ENCODE measurements at regions of chr12 and their contacts with region 1.

Region 1: GRCh38 chr12:48890657-48891418 is 25.2 kb upstream of the RND1 start:
- DNase-seq: peak; percentile 27
- H3K4me3 ChIP-seq: peak overlapping the region; percentile 47
- H3K27ac ChIP-seq: no peak overlapping the region
- H3K27me3 ChIP-seq: peaks cover 9% of the 10 kb centered on the region
- CTCF ChIP-seq: peak; percentile 94

Region 2: GRCh38 chr12:48750769-48751735 is 139.8 kb before region 1 on chr12:
- CTCF ChIA-PET with region 1: interaction called, 21 read pairs
- POLR2A ChIA-PET with region 1: no interaction called
- DNase-seq: no peak
- H3K4me3 ChIP-seq: no peak overlapping the region
- H3K27ac ChIP-seq: peak overlapping the region; percentile 39
- H3K27me3 ChIP-seq: no peaks in the 10 kb centered on the region
- CTCF ChIP-seq: no peak

Region 3: GRCh38 chr12:48873096-48873495 is 17.7 kb before region 1 on chr12:
- CTCF ChIA-PET with region 1: interaction called, 61 read pairs
- POLR2A ChIA-PET with region 1: no interaction called
- DNase-seq: no peak
- H3K4me3 ChIP-seq: no peak overlapping the region
- H3K27ac ChIP-seq: no peak overlapping the region
- H3K27me3 ChIP-seq: peaks cover 7% of the 10 kb centered on the region
- CTCF ChIP-seq: no peak

Region 4: DNA sequence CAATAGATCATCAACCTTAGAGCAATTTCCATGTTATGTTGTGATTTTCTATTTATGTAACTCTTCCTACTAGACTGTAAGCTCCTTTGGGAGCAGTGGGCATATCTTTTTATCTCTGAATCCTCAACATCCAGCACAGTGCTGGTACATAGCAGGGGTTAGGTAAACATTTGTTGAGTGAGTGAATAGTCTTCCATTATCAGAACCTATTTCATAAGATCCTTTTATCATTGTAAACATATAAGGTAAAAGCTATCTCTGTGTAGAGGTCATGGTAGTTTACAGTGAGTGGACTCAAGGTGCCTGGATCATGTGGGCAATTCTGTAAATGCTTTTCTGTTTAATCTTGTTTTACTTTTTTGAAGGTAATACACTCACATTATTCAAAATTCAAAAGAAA is 19.4 kb after region 1 on chr12:
- CTCF ChIA-PET with region 1: interaction called, 32 read pairs
- POLR2A ChIA-PET with region 1: no interaction called
- DNase-seq: no peak
- H3K4me3 ChIP-seq: no peak overlapping the region
- H3K27ac ChIP-seq: no peak overlapping the region
- H3K27me3 ChIP-seq: no peaks in the 10 kb centered on the region
- CTCF ChIP-seq: no peak

Region 5: GRCh38 chr12:48946205-48946604 is 55.4 kb after region 1 on chr12:
- CTCF ChIA-PET with region 1: interaction called, 12 read pairs
- POLR2A ChIA-PET with region 1: no interaction called
- DNase-seq: peak; percentile 45
- H3K4me3 ChIP-seq: no peak overlapping the region
- H3K27ac ChIP-seq: no peak overlapping the region
- H3K27me3 ChIP-seq: no peaks in the 10 kb centered on the region
- CTCF ChIP-seq: no peak

Region 6: GRCh38 chr12:48995061-48995879 is 104.4 kb after region 1 on chr12:
- CTCF ChIA-PET with region 1: interaction called, 11 read pairs
- POLR2A ChIA-PET with region 1: no interaction called
- DNase-seq: peak; percentile 49
- H3K4me3 ChIP-seq: peak overlapping the region; percentile 22; the same call in 1 of the 2 replicates
- H3K27ac ChIP-seq: no peak overlapping the region
- H3K27me3 ChIP-seq: peaks cover 31% of the 10 kb centered on the region
- CTCF ChIP-seq: peak; percentile 80

Measured in AG04450 (cell line).